ENCODE measurements at regions of chr20 and their contacts with region 1.

Region 1: DNA sequence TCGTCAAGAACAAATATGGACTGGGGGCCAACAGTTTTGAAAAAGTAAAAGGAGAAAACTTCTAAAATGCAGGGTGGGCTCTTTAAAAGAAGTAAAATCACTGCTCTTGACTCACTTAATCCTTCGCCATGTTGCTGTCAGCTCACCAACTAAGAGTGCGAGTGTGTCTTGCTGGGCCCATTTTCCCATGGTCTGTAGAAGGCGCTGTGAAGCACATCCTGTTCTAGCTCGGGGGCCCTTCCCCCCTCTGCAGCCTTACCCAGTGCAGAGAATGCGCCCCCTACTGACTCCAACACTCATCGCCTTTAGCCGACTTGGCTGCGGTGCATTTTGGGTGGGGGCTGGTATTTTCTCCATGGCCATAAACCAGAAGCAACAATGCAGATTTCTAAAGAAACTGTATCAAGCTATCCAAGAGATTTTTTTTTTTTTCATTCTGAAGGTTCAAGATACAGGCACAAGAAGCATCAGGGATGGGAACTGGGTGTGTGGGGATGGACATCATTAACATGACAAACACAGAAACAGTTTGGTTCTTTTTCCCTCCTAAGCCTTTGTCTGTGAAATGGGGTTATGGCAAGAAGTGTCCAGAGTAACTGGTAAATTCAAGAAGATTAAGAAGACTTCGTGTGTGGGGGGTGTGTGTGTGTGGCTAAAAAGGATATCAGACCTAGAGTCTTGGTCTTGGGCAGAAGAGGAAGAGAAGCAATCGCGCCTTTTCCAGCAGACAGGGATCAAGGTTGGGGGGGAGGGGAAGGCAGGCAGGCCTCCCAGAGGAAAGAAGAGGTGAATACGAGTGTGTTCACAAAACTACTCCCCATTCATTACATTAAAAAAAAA is 1.7 kb downstream of the ADNP start:
- DNase-seq: peak; percentile 87
- H3K4me3 ChIP-seq: peak overlapping the region; percentile 70 to 93 (median 80)
- H3K27ac ChIP-seq: peak overlapping the region; percentile 74
- H3K4me1 ChIP-seq: peaks cover 20% of the 10 kb centered on the region
- H3K27me3 ChIP-seq: no peaks in the 10 kb centered on the region
- CTCF ChIP-seq: peak; percentile 97 to 100

Region 2: DNA sequence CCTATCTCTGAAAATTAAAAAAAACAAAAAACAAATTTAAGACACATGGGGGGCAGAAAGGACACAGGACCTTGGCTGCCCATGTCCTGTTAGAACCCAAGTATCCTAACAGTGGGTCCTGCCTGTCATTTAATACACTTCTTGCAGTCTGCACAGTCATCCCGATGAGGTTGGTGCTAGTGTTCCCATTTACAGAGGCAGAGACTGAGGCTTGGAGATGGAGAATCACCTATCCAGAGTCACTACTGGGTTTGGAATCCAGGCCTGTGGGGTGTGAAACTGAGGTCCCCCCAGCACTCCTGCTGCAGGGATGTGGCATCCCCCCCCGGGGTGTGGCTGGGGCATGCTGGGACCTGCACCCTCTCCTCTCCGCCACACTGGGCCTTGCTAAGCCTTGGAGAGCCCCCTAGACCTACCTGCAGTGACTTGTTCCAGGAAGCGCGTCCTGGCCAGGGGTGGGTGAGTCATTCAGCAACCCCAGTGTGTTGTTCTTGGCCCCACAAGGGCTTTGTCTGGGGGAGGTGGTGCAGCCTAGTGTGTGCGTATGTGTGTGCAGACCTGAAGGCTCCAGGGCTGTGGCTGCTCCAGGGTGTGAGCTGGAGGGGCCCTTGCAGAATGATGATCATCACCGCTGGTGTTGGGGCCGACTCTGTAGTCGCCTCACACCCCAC is 85.0 kb before region 1 on chr20:
- CTCF ChIA-PET with region 1: interaction called, 3 read pairs
- dilution Hi-C with region 1: no loop called
- in situ Hi-C with region 1: no loop called
- intact Hi-C with region 1: loop called (anchors 2 kb)
- DNase-seq: peak; percentile 99
- H3K4me3 ChIP-seq: no peak overlapping the region
- H3K27ac ChIP-seq: peak overlapping the region; percentile 77
- H3K4me1 ChIP-seq: peaks cover 54% of the 10 kb centered on the region
- H3K27me3 ChIP-seq: no peaks in the 10 kb centered on the region
- CTCF ChIP-seq: no peak

Region 3: DNA sequence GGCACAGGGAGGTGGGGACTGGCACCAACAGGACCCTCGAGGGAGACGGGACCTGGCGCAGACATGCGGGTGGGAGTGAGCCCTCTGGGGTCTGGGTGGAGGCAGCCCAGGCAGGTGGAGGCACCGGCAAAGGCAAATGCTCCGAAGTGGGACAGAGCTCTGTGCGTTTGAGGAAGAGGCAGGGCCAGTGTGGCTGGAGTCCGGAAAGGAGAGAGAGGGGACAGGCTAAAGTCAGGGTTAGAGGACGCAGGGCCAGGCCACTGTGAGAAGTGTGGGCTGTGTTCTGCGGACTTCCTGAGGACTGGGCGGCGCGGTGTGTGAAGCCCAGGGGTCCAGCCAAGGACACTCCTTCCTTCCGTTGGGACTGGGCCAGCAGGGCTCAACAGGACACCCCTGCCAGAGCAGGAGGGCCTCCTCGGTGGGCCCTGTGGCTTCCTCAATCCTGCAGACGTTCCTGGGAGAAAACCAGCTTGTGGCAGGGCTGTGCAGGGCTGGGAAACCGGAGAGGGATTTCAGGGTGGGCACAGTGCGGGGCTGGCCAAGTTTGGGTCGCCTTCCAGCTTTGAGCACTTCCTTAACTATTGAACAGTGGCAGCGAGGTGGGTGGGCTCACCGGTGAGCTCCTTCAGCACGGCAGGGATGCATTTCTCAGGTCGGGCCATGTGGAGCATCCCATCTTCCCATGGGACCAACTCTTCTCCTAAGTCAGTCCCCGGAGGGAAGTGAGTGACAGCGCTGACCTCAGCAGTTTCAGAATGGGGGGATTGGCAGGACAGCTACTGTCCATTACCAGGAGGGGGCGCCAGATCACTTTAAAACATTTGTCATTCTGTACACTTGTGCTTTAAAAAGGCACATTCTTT is 51.6 kb after region 1 on chr20:
- CTCF ChIA-PET with region 1: no interaction called
- dilution Hi-C with region 1: no loop called
- in situ Hi-C with region 1: no loop called
- intact Hi-C with region 1: loop called (anchors 1 kb)
- DNase-seq: peak; percentile 52
- H3K4me3 ChIP-seq: no peak overlapping the region
- H3K27ac ChIP-seq: peak overlapping the region; percentile 84
- H3K4me1 ChIP-seq: peaks cover 34% of the 10 kb centered on the region
- H3K27me3 ChIP-seq: no peaks in the 10 kb centered on the region
- CTCF ChIP-seq: peak; percentile 70 to 91

Region 4: GRCh38 chr20:51172974-51173397 is 243.5 kb after region 1 on chr20:
- CTCF ChIA-PET with region 1: no interaction called
- dilution Hi-C with region 1: no loop called
- in situ Hi-C with region 1: no loop called
- intact Hi-C with region 1: no loop called
- DNase-seq: no peak
- H3K4me3 ChIP-seq: no peak overlapping the region
- H3K27ac ChIP-seq: no peak overlapping the region
- H3K4me1 ChIP-seq: no peaks in the 10 kb centered on the region
- H3K27me3 ChIP-seq: no peaks in the 10 kb centered on the region
- CTCF ChIP-seq: no peak

Measured in mammary epithelial cell (primary cell).